PC-9 (cell line): ENCODE measurements at regions of chr7 and their contacts with region 1.

Region 1: GRCh38 chr7:117385340-117386109 is 41.8 kb downstream of the ASZ1 start:
- DNase-seq: no peak
- H3K4me3 ChIP-seq: no peak overlapping the region
- H3K27ac ChIP-seq: no peak overlapping the region
- H3K4me1 ChIP-seq: no peaks in the 10 kb centered on the region; the same call in 1 of the 2 replicates
- H3K27me3 ChIP-seq: no peaks in the 10 kb centered on the region
- CTCF ChIP-seq: peak; percentile 60

Region 2: DNA sequence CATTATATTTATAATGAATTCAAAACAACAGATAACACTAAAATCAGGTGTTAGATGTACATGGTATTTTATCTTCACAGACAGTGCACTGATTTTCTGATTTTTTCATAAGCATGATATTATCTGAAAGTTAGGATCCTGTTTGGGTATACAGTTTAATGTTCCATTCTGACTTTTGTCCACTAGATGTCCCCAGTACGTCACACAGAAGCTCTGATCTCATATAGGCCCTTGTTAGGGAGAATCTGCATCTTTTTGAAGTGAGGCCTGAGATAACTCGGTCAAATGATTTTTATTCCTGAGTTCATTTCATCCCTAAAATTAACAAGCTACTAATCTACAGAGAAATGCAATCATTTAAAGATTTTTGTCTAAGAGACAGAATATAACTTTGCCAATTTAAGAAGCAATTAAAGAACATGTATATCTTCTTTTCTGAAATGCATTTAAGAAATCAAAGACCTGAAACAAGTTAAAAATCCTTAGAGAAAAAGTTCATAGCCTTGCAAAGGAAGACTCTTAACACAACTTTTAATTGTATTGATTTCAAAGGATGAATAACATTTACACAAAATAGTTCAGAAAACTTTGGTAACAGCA is 1247.2 kb before region 1 on chr7:
- CTCF ChIA-PET with region 1: no interaction called
- POLR2A ChIA-PET with region 1: no interaction called
- intact Hi-C with region 1: loop called (anchors 10 kb)
- DNase-seq: peak; percentile 24 to 43
- H3K4me3 ChIP-seq: no peak overlapping the region
- H3K27ac ChIP-seq: no peak overlapping the region
- H3K4me1 ChIP-seq: no peaks in the 10 kb centered on the region
- H3K27me3 ChIP-seq: no peaks in the 10 kb centered on the region
- CTCF ChIP-seq: peak; percentile 82

Region 3: GRCh38 chr7:116809636-116810266 is 575.8 kb before region 1 on chr7:
- CTCF ChIA-PET with region 1: no interaction called
- POLR2A ChIA-PET with region 1: no interaction called
- intact Hi-C with region 1: loop called (anchors 10 kb)
- DNase-seq: peak; percentile 31 to 71
- H3K4me3 ChIP-seq: peak overlapping the region; percentile 25; the same call in 1 of the 2 replicates
- H3K27ac ChIP-seq: peak overlapping the region; percentile 81
- H3K4me1 ChIP-seq: peaks cover 44% of the 10 kb centered on the region
- H3K27me3 ChIP-seq: no peaks in the 10 kb centered on the region
- CTCF ChIP-seq: peak; percentile 87

Region 4: GRCh38 chr7:116984917-116985316 is 400.6 kb before region 1 on chr7:
- CTCF ChIA-PET with region 1: no interaction called
- POLR2A ChIA-PET with region 1: no interaction called
- intact Hi-C with region 1: loop called (anchors 2 kb)
- DNase-seq: no peak
- H3K4me3 ChIP-seq: no peak overlapping the region
- H3K27ac ChIP-seq: no peak overlapping the region
- H3K4me1 ChIP-seq: peaks cover 22% of the 10 kb centered on the region
- H3K27me3 ChIP-seq: no peaks in the 10 kb centered on the region
- CTCF ChIP-seq: peak; percentile 77

Region 5: GRCh38 chr7:117212969-117213877 is 172.3 kb before region 1 on chr7:
- CTCF ChIA-PET with region 1: no interaction called
- POLR2A ChIA-PET with region 1: interaction called, 4 read pairs
- intact Hi-C with region 1: loop called (anchors 2 kb)
- DNase-seq: peak in 1 of 2 experiments; percentile 53
- H3K4me3 ChIP-seq: no peak overlapping the region
- H3K27ac ChIP-seq: no peak overlapping the region
- H3K4me1 ChIP-seq: no peaks in the 10 kb centered on the region
- H3K27me3 ChIP-seq: no peaks in the 10 kb centered on the region
- CTCF ChIP-seq: peak; percentile 90